Transverse colon (tissue), 4 donors: ENCODE measurements at regions of chr4 and their contacts with region 1.

Region 1: GRCh38 chr4:76850010-76850441 is 47.9 kb downstream of the SOWAHB start:
- DNase-seq: no peak
- H3K4me3 ChIP-seq: no peak overlapping the region
- H3K27ac ChIP-seq: no peak overlapping the region
- H3K4me1 ChIP-seq: peaks cover 0 to 3% (median under 1%) of the 10 kb centered on the region in 4 donors
- H3K27me3 ChIP-seq: no peaks in the 10 kb centered on the region
- CTCF ChIP-seq: no peak
- EP300 ChIP-seq: no peak
- POLR2A ChIP-seq: no peak

Region 2: GRCh38 chr4:76784237-76784636 is 65.8 kb before region 1 on chr4:
- in situ Hi-C with region 1: no loop called
- intact Hi-C with region 1: no loop called
- DNase-seq: no peak
- H3K4me3 ChIP-seq: no peak overlapping the region
- H3K27ac ChIP-seq: no peak overlapping the region
- H3K4me1 ChIP-seq: peaks cover 0 to 5% (median 0%) of the 10 kb centered on the region in 4 donors
- H3K27me3 ChIP-seq: no peaks in the 10 kb centered on the region
- CTCF ChIP-seq: peak in 2 of 5 experiments; percentile 9 to 13
- EP300 ChIP-seq: no peak
- POLR2A ChIP-seq: no peak

Region 3: GRCh38 chr4:76881375-76881774 is 31.3 kb after region 1 on chr4:
- in situ Hi-C with region 1: no loop called
- intact Hi-C with region 1: loop called (anchors 1 kb)
- DNase-seq: peak; percentile 73
- H3K4me3 ChIP-seq: no peak overlapping the region
- H3K27ac ChIP-seq: peak overlapping the region; percentile 35 to 53 (median 38)
- H3K4me1 ChIP-seq: peaks cover 6 to 33% (median 13%) of the 10 kb centered on the region in 4 donors
- H3K27me3 ChIP-seq: no peaks in the 10 kb centered on the region
- CTCF ChIP-seq: no peak
- EP300 ChIP-seq: no peak
- POLR2A ChIP-seq: no peak

Region 4: DNA sequence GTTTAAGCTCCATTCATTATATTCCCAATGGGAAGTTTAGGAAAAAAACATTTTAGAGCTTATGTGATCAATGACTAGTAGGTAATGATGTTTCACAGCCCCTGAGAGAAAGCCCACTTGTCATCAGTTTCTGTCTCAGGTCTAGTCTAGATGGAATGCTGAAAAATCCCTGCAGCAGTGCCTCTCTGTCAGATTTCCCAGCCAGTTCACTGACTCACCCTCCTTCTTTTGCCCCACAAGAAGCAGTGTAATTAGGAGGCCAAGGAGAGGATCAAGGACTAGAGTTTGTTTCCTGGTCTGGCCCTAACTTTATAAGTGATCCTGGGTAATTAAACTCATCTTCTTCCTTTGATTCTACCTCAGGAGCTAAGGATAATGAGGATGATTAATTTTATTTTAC is 1582.9 kb after region 1 on chr4:
- in situ Hi-C with region 1: no loop called
- intact Hi-C with region 1: loop called (anchors 5 kb)
- DNase-seq: no peak
- H3K4me3 ChIP-seq: no peak overlapping the region
- H3K27ac ChIP-seq: no peak overlapping the region
- H3K4me1 ChIP-seq: no peaks in the 10 kb centered on the region
- H3K27me3 ChIP-seq: no peaks in the 10 kb centered on the region
- CTCF ChIP-seq: no peak
- EP300 ChIP-seq: no peak
- POLR2A ChIP-seq: no peak